ENCODE measurements at regions of chr15 and their contacts with region 1.

Region 1: DNA sequence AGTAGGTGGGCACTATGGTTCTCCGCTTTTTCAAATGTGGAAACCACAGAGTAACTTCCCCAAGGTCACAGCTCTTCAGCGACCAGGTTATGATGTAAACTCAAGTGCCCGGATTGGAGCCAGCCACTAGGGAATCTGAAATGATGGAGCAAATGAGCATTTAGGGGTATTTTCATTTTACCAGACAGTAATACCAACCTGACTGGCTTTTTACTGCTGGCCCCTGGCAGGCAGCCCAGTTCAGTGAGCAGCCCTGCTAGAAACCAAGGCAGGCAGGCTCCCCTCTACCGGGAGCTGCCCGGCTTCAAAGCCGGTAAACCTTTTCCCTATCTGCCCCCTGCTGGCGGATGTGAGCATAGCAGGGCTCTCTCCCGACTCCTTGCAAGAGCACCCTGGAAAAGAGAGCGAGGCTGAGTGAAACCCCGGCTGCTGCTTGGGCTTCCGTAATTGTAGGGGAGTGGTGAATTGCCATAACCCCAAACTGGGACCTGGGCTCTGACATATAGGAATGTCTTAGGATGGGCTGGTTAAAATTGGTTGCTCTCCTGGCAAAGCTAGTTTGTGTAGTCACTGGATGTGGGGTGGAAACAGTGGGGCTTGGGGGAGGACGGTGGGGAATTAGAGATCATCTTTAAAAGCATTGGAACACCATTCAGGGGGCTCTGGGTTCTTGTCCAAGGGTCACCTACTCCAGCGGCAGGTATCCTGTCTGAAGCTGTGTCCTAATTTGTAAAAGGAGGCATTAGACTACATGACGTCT is 98.0 kb upstream of the TNFAIP8L3 start:
- DNase-seq: peak; percentile 76
- H3K4me3 ChIP-seq: no peak overlapping the region
- H3K27ac ChIP-seq: no peak overlapping the region
- H3K4me1 ChIP-seq: peaks cover 0 to 2% of the 10 kb centered on the region in 2 experiments; a peak in 1 of 4 replicates
- H3K27me3 ChIP-seq: peaks cover 21% of the 10 kb centered on the region; the same call in 1 of the 2 replicates
- CTCF ChIP-seq: peak; percentile 93
- EP300 ChIP-seq: no peak
- RAD21 ChIP-seq: peak; percentile 82

Region 2: DNA sequence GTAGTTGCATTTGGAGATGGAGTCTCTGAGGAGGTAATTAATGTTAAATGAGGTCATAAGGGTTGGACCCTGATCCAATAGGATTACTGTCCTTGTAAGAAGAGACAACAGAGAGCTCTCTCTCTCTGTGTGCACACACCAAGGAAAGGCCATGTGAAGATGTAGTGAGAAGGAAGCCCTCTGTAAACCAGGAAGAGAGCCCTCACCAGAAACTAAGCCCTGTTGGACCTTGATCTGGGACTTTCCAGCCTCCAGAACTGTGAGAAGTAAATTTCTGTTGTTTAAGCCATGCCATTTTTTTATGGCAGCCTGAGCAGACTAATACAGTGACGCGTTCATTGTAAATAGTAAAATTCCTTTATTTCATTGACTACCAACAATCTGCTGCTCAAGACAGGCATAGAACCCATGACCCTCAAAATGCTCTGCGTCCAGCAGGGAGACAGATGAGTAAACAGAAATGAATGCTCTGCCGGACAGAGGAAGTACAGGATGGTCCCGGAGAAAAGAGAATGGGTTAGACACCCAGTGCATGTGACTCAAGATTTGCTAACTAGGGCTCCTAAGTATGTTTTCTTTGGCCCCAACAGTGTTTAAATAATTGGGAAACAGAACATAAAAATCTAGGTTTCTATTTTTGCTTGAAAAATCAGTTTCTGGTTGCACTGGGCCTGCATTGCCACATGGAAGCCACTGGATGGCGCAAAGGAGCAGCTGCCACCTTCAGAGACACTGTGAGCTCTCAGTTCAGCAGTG is 60.1 kb before region 1 on chr15:
- CTCF ChIA-PET with region 1: interaction called, 19 read pairs
- POLR2A ChIA-PET with region 1: no interaction called
- DNase-seq: peak; percentile 45
- H3K4me3 ChIP-seq: peak overlapping the region in 1 of 2 experiments; percentile 47; a peak in 1 of 4 replicates
- H3K27ac ChIP-seq: peak overlapping the region in 1 of 2 experiments; percentile 48; a peak in 2 of 4 replicates
- H3K4me1 ChIP-seq: peaks cover 3 to 4% of the 10 kb centered on the region in 2 experiments; a peak in 2 of 4 replicates
- H3K27me3 ChIP-seq: no peaks in the 10 kb centered on the region
- CTCF ChIP-seq: peak; percentile 97
- EP300 ChIP-seq: no peak
- RAD21 ChIP-seq: peak; percentile 65

Region 3: DNA sequence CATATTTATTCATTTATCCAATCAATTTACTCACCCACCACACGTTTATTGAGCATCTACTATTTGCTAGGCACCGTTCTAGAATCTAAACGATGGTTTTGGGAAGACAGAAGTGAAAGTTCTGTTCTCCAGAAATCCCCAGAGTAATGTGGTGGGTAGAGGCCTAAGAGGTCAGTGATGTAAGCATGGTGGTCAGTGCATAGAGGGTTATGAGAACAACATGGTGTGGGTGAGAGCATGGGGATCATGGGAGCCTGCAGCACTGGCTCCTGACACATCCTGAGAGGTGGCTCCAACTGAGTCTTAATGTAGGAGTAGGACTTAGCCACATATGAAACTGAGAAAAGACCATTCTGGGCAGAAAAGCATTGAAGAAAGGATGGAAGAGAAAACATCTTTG is 12.7 kb before region 1 on chr15:
- CTCF ChIA-PET with region 1: interaction called, 31 read pairs
- POLR2A ChIA-PET with region 1: no interaction called
- DNase-seq: no peak
- H3K4me3 ChIP-seq: no peak overlapping the region
- H3K27ac ChIP-seq: no peak overlapping the region
- H3K4me1 ChIP-seq: no peaks in the 10 kb centered on the region
- H3K27me3 ChIP-seq: peaks cover 11% of the 10 kb centered on the region; the same call in 1 of the 2 replicates
- CTCF ChIP-seq: no peak
- EP300 ChIP-seq: no peak
- RAD21 ChIP-seq: no peak

Region 4: GRCh38 chr15:51218299-51218938 is 25.7 kb after region 1 on chr15:
- CTCF ChIA-PET with region 1: interaction called, 16 read pairs
- POLR2A ChIA-PET with region 1: no interaction called
- DNase-seq: no peak
- H3K4me3 ChIP-seq: no peak overlapping the region
- H3K27ac ChIP-seq: no peak overlapping the region
- H3K4me1 ChIP-seq: no peaks in the 10 kb centered on the region
- H3K27me3 ChIP-seq: peaks cover 9% of the 10 kb centered on the region; the same call in 1 of the 2 replicates
- CTCF ChIP-seq: no peak
- EP300 ChIP-seq: no peak
- RAD21 ChIP-seq: no peak

Region 5: GRCh38 chr15:51375726-51376640 is 183.3 kb after region 1 on chr15:
- CTCF ChIA-PET with region 1: interaction called, 26 read pairs
- POLR2A ChIA-PET with region 1: no interaction called
- DNase-seq: no peak
- H3K4me3 ChIP-seq: no peak overlapping the region
- H3K27ac ChIP-seq: no peak overlapping the region
- H3K4me1 ChIP-seq: peaks cover 0 to 14% of the 10 kb centered on the region in 2 experiments; a peak in 2 of 4 replicates
- H3K27me3 ChIP-seq: no peaks in the 10 kb centered on the region; the same call in 1 of the 2 replicates
- CTCF ChIP-seq: no peak
- EP300 ChIP-seq: no peak
- RAD21 ChIP-seq: no peak

Measured in SK-N-SH (cell line).